HepG2 (cell line): ENCODE measurements at regions of chr11 and their contacts with region 1.

Region 1: DNA sequence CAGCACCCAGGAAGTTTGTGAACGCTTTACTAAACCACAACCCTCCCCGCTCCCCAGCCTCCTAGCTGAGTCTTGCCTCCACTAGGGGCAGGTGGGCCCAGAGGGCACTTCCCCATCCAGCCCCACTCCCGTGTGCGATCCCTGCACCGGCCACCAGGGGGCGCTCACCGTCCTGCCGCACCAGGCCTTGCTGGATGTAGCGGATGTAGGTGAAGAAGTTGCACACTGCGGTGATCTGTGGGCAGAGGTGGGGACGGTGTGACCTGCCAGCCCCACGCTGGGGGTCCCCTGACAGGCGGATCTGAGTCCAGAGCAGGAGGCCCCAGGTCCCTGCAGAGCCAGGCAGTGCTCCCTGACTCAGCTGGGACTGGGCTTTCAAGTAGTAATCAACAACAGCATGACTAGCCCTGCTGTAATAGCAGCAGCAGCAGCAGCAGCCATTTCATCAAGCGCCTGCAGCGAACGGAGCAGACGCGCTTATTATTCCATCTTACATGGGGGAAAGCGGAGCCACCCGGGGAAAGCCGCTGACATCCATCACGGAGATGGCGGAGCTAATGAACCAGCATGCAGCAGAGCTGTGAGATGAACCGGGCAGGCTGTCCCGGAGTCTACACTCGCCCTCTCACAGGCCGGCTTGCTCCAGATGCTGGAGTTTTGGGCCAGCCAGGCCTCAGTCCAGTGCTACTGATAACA is 7.9 kb upstream of the FADS3 start:
- DNase-seq: peak; percentile 72
- ATAC-seq: peak; percentile 85
- H3K4me3 ChIP-seq: no peak overlapping the region
- H3K27ac ChIP-seq: no peak overlapping the region
- H3K4me1 ChIP-seq: peaks cover 24% of the 10 kb centered on the region
- H3K27me3 ChIP-seq: no peaks in the 10 kb centered on the region
- CTCF ChIP-seq: peak; percentile 99
- EP300 ChIP-seq: no peak
- POLR2A ChIP-seq: no peak
- RAD21 ChIP-seq: peak; percentile 98

Region 2: DNA sequence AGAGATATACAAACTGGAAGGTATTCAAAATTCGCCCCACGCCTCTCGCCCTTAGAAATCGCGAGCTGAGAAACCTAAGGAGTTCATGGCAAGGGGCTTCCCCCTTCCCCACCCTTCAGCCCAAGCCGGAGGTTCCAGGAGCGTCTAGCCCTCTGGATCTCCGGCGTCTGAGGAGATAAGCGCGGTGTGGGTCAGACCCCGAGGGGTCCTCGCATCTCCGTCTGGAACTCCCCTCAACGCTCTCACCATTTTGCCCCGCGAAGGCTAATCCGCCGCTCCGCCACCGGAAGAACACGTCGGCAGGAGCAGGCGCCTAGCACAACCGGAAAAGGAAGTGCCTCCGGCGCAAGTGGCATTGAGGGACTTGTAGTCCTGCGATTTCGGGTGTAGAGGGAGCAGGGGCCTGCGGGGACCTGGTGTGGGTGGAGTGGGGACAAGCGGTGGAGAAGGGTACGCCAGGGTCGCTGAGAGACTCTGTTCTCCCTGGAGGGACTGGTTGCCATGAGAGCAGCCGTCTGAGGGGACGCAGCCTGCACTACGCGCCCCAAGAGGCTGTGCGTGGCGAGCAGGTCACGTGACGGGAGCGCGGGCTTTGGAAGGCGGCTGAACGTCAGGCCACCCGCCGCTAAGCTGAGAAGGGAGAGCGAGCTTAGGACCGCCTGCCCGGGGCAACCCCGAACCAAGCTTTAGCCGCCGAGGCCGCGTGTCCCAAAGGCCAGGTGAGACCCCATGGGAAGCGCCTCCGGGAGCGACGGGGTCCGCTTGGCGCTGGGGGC is 106.8 kb before region 1 on chr11 and contains the starts of genes FEN1 and TMEM258:
- CTCF ChIA-PET with region 1: interaction called, 6 read pairs
- POLR2A ChIA-PET with region 1: interaction called, 6 read pairs
- in situ Hi-C with region 1: no loop called
- intact Hi-C with region 1: loop called (anchors 2 kb)
- DNase-seq: peak; percentile 91
- ATAC-seq: peak; percentile 86
- H3K4me3 ChIP-seq: peak within 1 kb of the TSS; percentile 68 to 87 (median 81)
- H3K27ac ChIP-seq: peak within 1 kb of the TSS; percentile 99
- H3K4me1 ChIP-seq: peaks cover 49% of the 10 kb centered on the region
- H3K27me3 ChIP-seq: no peaks in the 10 kb centered on the region; a peak in 1 of 5 replicates
- CTCF ChIP-seq: no peak
- EP300 ChIP-seq: no peak
- POLR2A ChIP-seq: peak; percentile 79 to 89
- RAD21 ChIP-seq: no peak
- total RNA-seq, gene FEN1: 102 and 116 TPM in 2 replicates
- total RNA-seq, gene TMEM258: 164 and 175 TPM in 2 replicates

Region 3: DNA sequence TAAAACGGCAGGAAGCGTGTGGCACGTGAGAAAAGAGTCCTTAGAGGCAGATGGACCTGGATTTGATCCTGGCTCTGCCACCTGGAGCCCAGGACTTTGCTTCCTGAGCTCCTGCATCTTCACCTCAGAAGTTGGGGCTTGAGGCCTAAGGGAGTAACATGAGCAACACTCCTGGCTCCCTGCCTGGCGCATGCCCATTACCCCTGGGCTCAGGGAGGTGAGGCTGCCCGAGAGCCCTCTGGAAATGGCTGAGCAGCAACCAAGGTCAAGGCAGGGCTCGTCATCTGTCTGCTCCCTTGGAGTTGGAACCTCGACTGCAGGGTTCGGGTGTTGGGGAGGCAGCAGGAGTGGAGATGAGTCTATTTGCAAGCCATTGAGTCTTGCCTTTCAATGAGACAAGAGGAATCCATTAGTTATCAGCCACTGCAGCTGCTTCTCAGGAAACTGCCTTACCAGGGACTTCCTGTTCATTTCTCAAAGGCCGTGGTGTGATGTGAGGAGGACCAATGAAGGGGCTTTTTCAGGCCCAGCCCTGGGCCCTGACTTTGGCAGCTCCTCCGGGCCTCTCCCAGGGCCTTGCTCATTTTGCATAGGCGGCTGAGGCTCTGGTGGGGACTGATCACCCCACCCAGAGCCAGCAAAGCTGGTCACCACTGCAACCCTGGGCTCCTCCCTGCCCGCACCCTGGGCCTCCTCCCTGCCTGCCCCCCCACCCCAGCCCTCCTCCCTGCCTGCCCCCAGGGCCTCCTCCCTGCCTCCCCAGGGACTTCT is 64.8 kb before region 1 on chr11:
- CTCF ChIA-PET with region 1: no interaction called
- POLR2A ChIA-PET with region 1: no interaction called
- in situ Hi-C with region 1: no loop called
- intact Hi-C with region 1: no loop called
- DNase-seq: no peak
- ATAC-seq: no peak; the same call in 2 of the 3 replicates
- H3K4me3 ChIP-seq: no peak overlapping the region
- H3K27ac ChIP-seq: no peak overlapping the region
- H3K4me1 ChIP-seq: peaks cover 25% of the 10 kb centered on the region
- H3K27me3 ChIP-seq: no peaks in the 10 kb centered on the region
- CTCF ChIP-seq: no peak
- EP300 ChIP-seq: no peak
- POLR2A ChIP-seq: no peak
- RAD21 ChIP-seq: no peak

Region 4: GRCh38 chr11:61864814-61865775 is 34.2 kb before region 1 on chr11:
- CTCF ChIA-PET with region 1: no interaction called
- POLR2A ChIA-PET with region 1: no interaction called
- in situ Hi-C with region 1: no loop called
- intact Hi-C with region 1: no loop called
- DNase-seq: no peak
- ATAC-seq: no peak
- H3K4me3 ChIP-seq: no peak overlapping the region
- H3K27ac ChIP-seq: no peak overlapping the region
- H3K4me1 ChIP-seq: peaks cover 11% of the 10 kb centered on the region
- H3K27me3 ChIP-seq: no peaks in the 10 kb centered on the region; a peak in 1 of 5 replicates
- CTCF ChIP-seq: no peak
- EP300 ChIP-seq: no peak
- POLR2A ChIP-seq: no peak
- RAD21 ChIP-seq: no peak

Region 5: DNA sequence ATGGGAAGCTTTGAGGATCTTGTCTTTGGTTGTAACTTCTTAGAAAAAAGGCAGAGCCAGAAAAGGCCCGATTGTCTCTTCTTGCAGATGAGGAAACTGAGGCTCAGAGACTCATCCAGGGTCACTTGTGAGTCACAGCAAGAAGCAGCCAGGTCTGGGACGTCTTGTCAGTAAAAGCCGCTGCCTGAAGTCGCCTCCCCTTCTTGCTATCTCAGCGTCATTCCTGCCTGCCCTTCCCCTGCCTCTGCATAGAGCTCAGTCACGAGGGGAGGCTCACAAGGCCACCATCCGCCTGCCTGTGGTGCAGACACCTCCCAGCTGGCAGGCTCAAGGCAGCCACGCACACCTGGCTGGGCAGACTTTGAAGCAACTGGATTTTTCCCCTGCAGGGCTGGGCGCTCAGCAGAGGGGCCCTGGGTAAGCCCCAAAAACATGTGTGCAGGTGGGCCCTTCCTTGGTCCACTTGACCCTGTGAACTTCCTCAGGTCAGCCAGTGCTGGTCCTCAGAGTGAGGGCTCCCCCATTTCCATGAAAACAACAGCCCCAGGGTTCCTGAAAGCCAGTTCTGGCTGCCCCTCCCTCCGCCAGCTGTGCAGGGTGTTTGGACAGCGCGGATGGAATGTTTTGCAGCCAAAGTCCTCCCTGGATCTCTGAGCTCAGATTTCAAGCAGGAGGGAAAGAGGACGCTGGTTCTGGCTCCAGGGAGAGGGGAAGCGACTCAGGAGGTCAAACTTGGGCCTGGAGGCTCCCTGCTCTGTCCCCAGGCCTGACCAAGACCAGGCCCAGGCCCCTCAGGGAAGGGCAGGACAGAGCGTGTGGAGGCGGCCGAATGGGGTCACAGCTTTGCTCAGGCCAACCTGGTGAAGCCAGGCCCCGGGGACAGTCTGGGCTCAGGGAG is 24.1 kb after region 1 on chr11:
- CTCF ChIA-PET with region 1: interaction called, 4 read pairs
- POLR2A ChIA-PET with region 1: interaction called, 37 read pairs
- in situ Hi-C with region 1: no loop called
- intact Hi-C with region 1: no loop called
- DNase-seq: peak; percentile 87
- ATAC-seq: peak; percentile 93
- H3K4me3 ChIP-seq: peak overlapping the region; percentile 27 to 66 (median 42)
- H3K27ac ChIP-seq: peak overlapping the region; percentile 75
- H3K4me1 ChIP-seq: peaks cover 48% of the 10 kb centered on the region
- H3K27me3 ChIP-seq: peaks cover 6 to 24% of the 10 kb centered on the region in 2 experiments
- CTCF ChIP-seq: peak; percentile 30; the same call in 1 of the 2 replicates
- EP300 ChIP-seq: peak in 1 of 2 experiments; percentile 59; a peak in 1 of 4 replicates
- POLR2A ChIP-seq: peak; percentile 38 to 63; a peak in 2 of 4 replicates
- RAD21 ChIP-seq: no peak

Region 6: DNA sequence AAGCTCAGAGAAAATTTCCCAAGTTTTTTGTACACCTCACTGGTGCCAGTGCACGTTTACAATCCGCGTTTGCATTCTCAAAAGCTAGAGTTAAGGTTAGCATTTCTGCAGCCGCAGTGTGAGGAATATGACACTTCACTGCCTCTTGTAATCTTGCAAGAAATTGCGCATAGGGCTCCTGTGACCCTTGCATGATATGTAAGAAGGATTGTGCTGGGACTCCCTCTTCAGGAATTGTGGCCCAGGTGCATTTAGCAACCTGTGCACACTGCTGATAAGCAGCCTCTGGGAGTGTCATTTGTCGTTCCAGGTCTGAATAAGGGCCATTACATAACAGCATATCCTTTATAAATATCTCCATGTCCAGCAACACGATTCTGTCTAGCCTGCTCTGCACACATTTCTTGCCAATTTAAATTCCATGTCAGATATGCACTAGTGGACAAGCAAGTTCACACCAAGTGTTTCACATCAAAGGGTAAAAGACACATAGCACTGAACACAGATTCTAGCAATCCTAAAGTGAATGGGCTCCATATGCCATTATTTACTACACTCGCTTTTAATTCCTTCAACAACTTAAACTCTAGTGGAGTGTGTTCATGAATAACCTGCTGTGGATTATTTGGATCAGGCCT is 155.3 kb after region 1 on chr11:
- CTCF ChIA-PET with region 1: interaction called, 20 read pairs
- POLR2A ChIA-PET with region 1: interaction called, 3 read pairs
- in situ Hi-C with region 1: loop called (anchors 5 kb)
- intact Hi-C with region 1: loop called (anchors 2 kb)
- DNase-seq: peak; percentile 78
- ATAC-seq: peak; percentile 66; the same call in 2 of the 3 replicates
- H3K4me3 ChIP-seq: no peak overlapping the region
- H3K27ac ChIP-seq: no peak overlapping the region
- H3K4me1 ChIP-seq: peaks cover 27% of the 10 kb centered on the region
- H3K27me3 ChIP-seq: peaks cover 0 to 3% of the 10 kb centered on the region in 2 experiments; a peak in 2 of 5 replicates
- CTCF ChIP-seq: peak; percentile 91
- EP300 ChIP-seq: no peak
- POLR2A ChIP-seq: no peak
- RAD21 ChIP-seq: peak; percentile 82

Region 7: GRCh38 chr11:62081378-62082291 is 182.3 kb after region 1 on chr11:
- CTCF ChIA-PET with region 1: interaction called, 43 read pairs
- POLR2A ChIA-PET with region 1: interaction called, 5 read pairs
- in situ Hi-C with region 1: no loop called
- intact Hi-C with region 1: loop called (anchors 1 kb)
- DNase-seq: peak; percentile 46
- ATAC-seq: peak; percentile 71
- H3K4me3 ChIP-seq: no peak overlapping the region; a peak in 1 of 6 replicates
- H3K27ac ChIP-seq: no peak overlapping the region
- H3K4me1 ChIP-seq: peaks cover 6% of the 10 kb centered on the region; the same call in 1 of the 2 replicates
- H3K27me3 ChIP-seq: no peaks in the 10 kb centered on the region
- CTCF ChIP-seq: peak; percentile 92
- EP300 ChIP-seq: no peak
- POLR2A ChIP-seq: no peak
- RAD21 ChIP-seq: peak; percentile 89